Activated CD8-positive, alpha-beta T cell treated with anti-CD3 and anti-CD28 coated beads for 36 hours (primary cell): ENCODE measurements at regions of chr19 and their contacts with region 1.

Region 1: GRCh38 chr19:49487277-49488045 is at the start of gene RPL13A:
- DNase-seq: peak; percentile 100
- ATAC-seq: peak; percentile 93
- H3K4me3 Mint-ChIP-seq: peak within 1 kb of the TSS; percentile 100
- H3K27ac Mint-ChIP-seq: peak within 1 kb of the TSS; percentile 99
- H3K4me1 Mint-ChIP-seq: peaks cover 31% of the 10 kb centered on the region
- H3K27me3 Mint-ChIP-seq: no peaks in the 10 kb centered on the region
- CTCF ChIP-seq: no peak
- total RNA-seq, gene RPL13A: 4,285 to 4,329 TPM

Region 2: DNA sequence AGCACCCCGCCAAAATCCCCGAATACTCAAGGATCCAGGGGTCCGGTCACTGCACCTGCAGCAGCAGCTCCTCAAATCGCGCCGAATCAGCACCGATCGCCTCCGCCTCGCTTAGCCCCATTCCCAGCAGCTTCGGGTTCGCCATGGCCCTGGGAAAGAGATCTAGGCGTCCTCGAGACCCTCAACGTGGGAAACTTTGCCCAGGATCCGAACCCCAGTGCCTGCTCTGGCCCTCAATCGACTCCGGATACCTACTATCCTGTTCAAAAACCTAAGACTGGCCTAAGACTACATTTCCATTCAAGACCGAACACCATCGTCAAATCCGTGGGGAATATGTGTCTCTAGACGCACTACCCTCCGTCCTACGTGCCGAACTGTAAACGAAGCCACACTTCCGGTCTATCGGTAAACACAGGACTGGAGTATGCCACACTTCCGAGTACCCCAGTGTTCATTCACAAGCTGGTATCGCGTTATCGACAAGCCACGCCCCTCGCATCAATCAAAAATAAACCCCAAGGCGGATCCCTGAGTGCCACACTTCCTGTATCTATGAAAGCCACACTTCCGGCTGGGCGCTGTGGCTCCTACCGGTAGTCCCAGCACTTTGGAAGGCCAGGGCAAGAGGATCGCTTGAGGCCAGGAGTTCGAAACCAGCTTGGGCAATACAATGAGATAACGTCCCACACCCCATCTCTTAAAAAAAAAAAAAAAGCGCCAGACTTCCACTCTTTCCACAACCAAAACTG is 35.9 kb before region 1 on chr19 and contains the start of gene PIH1D1:
- CTCF ChIA-PET with region 1: no interaction called
- POLR2A ChIA-PET with region 1: interaction called, 15 read pairs
- intact Hi-C with region 1: no loop called
- DNase-seq: peak; percentile 99
- ATAC-seq: peak; percentile 70
- H3K4me3 Mint-ChIP-seq: peak within 1 kb of the TSS; percentile 93
- H3K27ac Mint-ChIP-seq: peak within 1 kb of the TSS; percentile 100
- H3K4me1 Mint-ChIP-seq: peaks cover 53% of the 10 kb centered on the region
- H3K27me3 Mint-ChIP-seq: no peaks in the 10 kb centered on the region
- CTCF ChIP-seq: no peak
- total RNA-seq, gene PIH1D1: 124 to 126 TPM

Region 3: DNA sequence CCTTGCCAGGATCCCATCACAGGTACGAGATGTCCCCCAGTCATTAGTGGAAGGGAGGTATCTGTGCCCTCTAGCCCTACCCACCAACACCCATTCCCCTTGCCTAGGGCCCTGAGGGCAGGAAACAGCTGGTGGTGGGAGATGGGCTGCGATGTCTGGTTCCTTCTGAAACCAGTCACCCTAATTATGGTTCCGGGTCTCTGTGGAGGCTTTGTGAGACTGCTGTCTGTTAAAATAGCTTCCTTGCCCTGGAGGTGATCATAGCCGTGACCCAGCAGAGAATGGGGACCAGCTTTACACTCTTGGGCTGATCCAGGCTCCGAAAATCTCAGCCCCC is 28.9 kb before region 1 on chr19:
- CTCF ChIA-PET with region 1: no interaction called
- POLR2A ChIA-PET with region 1: interaction called, 15 read pairs
- intact Hi-C with region 1: no loop called
- DNase-seq: no peak
- ATAC-seq: no peak
- H3K4me3 Mint-ChIP-seq: no peak overlapping the region
- H3K27ac Mint-ChIP-seq: peak overlapping the region; percentile 42
- H3K4me1 Mint-ChIP-seq: peaks cover 15% of the 10 kb centered on the region
- H3K27me3 Mint-ChIP-seq: no peaks in the 10 kb centered on the region
- CTCF ChIP-seq: no peak

Region 4: GRCh38 chr19:49473868-49474544 is 13.5 kb before region 1 on chr19 and contains the start of gene FLT3LG:
- CTCF ChIA-PET with region 1: interaction called, 19 read pairs
- POLR2A ChIA-PET with region 1: interaction called, 76 read pairs
- intact Hi-C with region 1: no loop called
- DNase-seq: peak; percentile 93
- ATAC-seq: peak; percentile 60
- H3K4me3 Mint-ChIP-seq: peak within 1 kb of the TSS; percentile 89
- H3K27ac Mint-ChIP-seq: peak within 1 kb of the TSS; percentile 92
- H3K4me1 Mint-ChIP-seq: peaks cover 45% of the 10 kb centered on the region
- H3K27me3 Mint-ChIP-seq: no peaks in the 10 kb centered on the region
- CTCF ChIP-seq: peak; percentile 94
- total RNA-seq, gene FLT3LG: 57.7 to 61.2 TPM

Region 5: GRCh38 chr19:49555600-49556411 is 68.3 kb after region 1 on chr19:
- CTCF ChIA-PET with region 1: no interaction called
- POLR2A ChIA-PET with region 1: interaction called, 33 read pairs
- intact Hi-C with region 1: no loop called
- DNase-seq: peak; percentile 94
- ATAC-seq: peak; percentile 65
- H3K4me3 Mint-ChIP-seq: peak overlapping the region; percentile 63
- H3K27ac Mint-ChIP-seq: peak overlapping the region; percentile 94
- H3K4me1 Mint-ChIP-seq: peaks cover 76% of the 10 kb centered on the region
- H3K27me3 Mint-ChIP-seq: no peaks in the 10 kb centered on the region
- CTCF ChIP-seq: no peak

Region 6: DNA sequence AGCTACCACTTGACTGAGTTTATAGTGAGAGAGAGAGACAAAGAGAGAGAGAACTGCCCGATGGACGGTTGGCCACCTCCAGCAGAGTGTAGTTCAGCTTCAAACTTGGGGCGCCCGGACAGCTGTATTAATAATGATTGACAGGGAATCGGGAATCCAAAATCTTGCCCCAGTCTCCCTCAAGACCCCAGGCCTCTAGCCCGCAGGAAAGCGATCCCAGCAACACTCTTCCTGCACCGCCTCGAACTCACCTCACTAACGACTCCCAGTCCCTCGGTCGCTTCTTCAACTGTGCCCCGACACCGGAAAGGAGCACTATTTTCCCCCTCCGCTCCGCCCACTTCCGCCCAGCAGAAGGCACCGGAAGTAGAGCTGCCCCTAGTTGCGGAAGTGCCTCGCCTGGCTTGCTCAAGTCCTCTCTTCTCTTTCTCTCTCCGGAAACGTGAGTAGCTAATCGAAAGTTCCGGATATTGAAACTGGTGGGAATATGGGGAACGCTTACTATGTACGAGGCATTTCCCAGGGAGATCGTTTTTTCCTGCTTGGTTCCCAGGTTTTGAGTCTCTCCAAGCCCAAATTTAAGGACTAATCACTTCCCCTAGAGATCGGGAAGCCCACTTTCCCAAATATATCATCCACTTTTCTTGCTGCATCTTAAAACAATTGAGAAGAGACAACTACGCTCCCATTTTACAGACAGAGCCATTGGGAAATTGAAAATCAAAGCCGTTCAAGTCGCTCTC is 93.0 kb after region 1 on chr19 and contains the start of gene NOSIP:
- CTCF ChIA-PET with region 1: no interaction called
- POLR2A ChIA-PET with region 1: interaction called, 17 read pairs
- intact Hi-C with region 1: no loop called
- DNase-seq: peak; percentile 97
- ATAC-seq: peak; percentile 98
- H3K4me3 Mint-ChIP-seq: peak within 1 kb of the TSS; percentile 95
- H3K27ac Mint-ChIP-seq: peak within 1 kb of the TSS; percentile 90
- H3K4me1 Mint-ChIP-seq: peaks cover 32% of the 10 kb centered on the region
- H3K27me3 Mint-ChIP-seq: no peaks in the 10 kb centered on the region
- CTCF ChIP-seq: no peak
- total RNA-seq, gene NOSIP: 75.6 to 79.4 TPM

Region 7: GRCh38 chr19:49590071-49590970 is 102.9 kb after region 1 on chr19:
- CTCF ChIA-PET with region 1: no interaction called
- POLR2A ChIA-PET with region 1: interaction called, 10 read pairs
- intact Hi-C with region 1: no loop called
- DNase-seq: peak; percentile 99
- ATAC-seq: peak; percentile 77
- H3K4me3 Mint-ChIP-seq: peak overlapping the region; percentile 77
- H3K27ac Mint-ChIP-seq: peak overlapping the region; percentile 92
- H3K4me1 Mint-ChIP-seq: peaks cover 23% of the 10 kb centered on the region
- H3K27me3 Mint-ChIP-seq: no peaks in the 10 kb centered on the region
- CTCF ChIP-seq: peak; percentile 25